Activated B cell treated with CpG ODN at 0.5 μM for 24 hours (primary cell): ENCODE measurements at regions of chr17 and their contacts with region 1.

Region 1: GRCh38 chr17:75779231-75779986 is 5.2 kb upstream of the UNK start:
- DNase-seq: peak; percentile 87
- ATAC-seq: peak; percentile 64
- H3K4me3 Mint-ChIP-seq: peak overlapping the region; percentile 89
- H3K27ac Mint-ChIP-seq: peak overlapping the region; percentile 94
- H3K4me1 Mint-ChIP-seq: peaks cover 60% of the 10 kb centered on the region
- H3K27me3 Mint-ChIP-seq: no peaks in the 10 kb centered on the region
- CTCF ChIP-seq: no peak

Region 2: GRCh38 chr17:75524953-75525719 is 254.3 kb before region 1 on chr17 and contains the start of gene LLGL2:
- CTCF ChIA-PET with region 1: no interaction called
- POLR2A ChIA-PET with region 1: interaction called, 4 read pairs
- intact Hi-C with region 1: loop called (anchors 1 kb)
- DNase-seq: peak; percentile 88
- ATAC-seq: peak; percentile 94
- H3K4me3 Mint-ChIP-seq: peak within 1 kb of the TSS; percentile 77
- H3K27ac Mint-ChIP-seq: peak within 1 kb of the TSS; percentile 18
- H3K4me1 Mint-ChIP-seq: peaks cover 10% of the 10 kb centered on the region
- H3K27me3 Mint-ChIP-seq: no peaks in the 10 kb centered on the region
- CTCF ChIP-seq: no peak
- total RNA-seq, gene LLGL2: 27.5 and 29.9 TPM in 2 replicates

Region 3: GRCh38 chr17:75764711-75765421 is 14.5 kb before region 1 on chr17 and contains the start of gene GALK1:
- CTCF ChIA-PET with region 1: interaction called, 9 read pairs
- POLR2A ChIA-PET with region 1: interaction called, 91 read pairs
- intact Hi-C with region 1: loop called (anchors 1 kb)
- DNase-seq: peak; percentile 74
- ATAC-seq: peak; percentile 95
- H3K4me3 Mint-ChIP-seq: peak within 1 kb of the TSS; percentile 81
- H3K27ac Mint-ChIP-seq: peak within 1 kb of the TSS; percentile 53
- H3K4me1 Mint-ChIP-seq: peaks cover 16% of the 10 kb centered on the region
- H3K27me3 Mint-ChIP-seq: no peaks in the 10 kb centered on the region
- CTCF ChIP-seq: no peak
- total RNA-seq, gene GALK1: 14.9 and 22.9 TPM in 2 replicates

Region 4: DNA sequence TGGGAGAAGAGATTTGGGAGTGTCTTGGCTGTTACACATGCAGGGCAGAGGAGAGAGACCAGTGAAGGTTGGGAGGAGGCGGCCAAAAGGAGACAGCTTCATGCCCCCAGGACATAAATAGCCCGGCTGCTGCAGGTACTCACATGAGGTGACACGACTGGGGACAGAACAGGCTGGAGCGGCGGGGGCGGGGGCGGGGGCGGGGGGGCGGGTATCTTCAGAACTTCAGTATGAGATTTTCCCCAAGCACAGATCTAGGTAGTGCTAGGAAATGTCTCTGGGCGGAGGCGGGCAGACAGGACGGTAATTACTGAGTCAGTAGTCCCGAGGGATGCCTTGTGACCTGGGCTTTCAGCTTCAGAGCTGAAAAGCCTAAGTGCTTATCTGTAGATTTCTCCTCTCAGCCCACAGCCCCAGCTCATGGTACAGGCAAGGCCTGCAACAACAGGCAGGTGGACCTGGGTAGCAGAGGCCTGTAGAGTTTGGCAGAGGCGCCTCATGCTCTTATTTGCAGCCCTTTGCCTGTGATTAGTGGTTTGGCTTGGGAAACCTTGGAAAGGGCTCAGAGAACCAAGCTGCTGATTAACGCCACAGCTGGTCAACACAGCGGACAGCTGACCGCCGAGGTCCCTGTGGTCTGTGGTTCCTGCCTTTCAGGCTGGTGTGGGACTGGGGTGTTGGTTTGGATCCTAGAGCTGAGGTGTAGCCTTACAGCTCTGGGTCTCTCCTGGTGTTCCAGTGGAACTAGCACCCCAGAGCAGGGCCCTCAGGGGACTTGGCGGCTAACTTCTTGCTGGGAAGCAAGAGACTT is 29.7 kb after region 1 on chr17:
- CTCF ChIA-PET with region 1: no interaction called
- POLR2A ChIA-PET with region 1: interaction called, 13 read pairs
- intact Hi-C with region 1: loop called (anchors 2 kb)
- DNase-seq: no peak
- ATAC-seq: peak; percentile 99
- H3K4me3 Mint-ChIP-seq: no peak overlapping the region
- H3K27ac Mint-ChIP-seq: peak overlapping the region; percentile 19
- H3K4me1 Mint-ChIP-seq: peaks cover 15% of the 10 kb centered on the region
- H3K27me3 Mint-ChIP-seq: no peaks in the 10 kb centered on the region
- CTCF ChIP-seq: no peak

Region 5: GRCh38 chr17:75845049-75845860 is 65.8 kb after region 1 on chr17:
- CTCF ChIA-PET with region 1: interaction called, 9 read pairs
- POLR2A ChIA-PET with region 1: interaction called, 70 read pairs
- intact Hi-C with region 1: no loop called
- DNase-seq: peak; percentile 71
- ATAC-seq: peak; percentile 90
- H3K4me3 Mint-ChIP-seq: peak overlapping the region; percentile 66
- H3K27ac Mint-ChIP-seq: peak overlapping the region; percentile 75
- H3K4me1 Mint-ChIP-seq: peaks cover 29% of the 10 kb centered on the region
- H3K27me3 Mint-ChIP-seq: no peaks in the 10 kb centered on the region
- CTCF ChIP-seq: no peak

Region 6: DNA sequence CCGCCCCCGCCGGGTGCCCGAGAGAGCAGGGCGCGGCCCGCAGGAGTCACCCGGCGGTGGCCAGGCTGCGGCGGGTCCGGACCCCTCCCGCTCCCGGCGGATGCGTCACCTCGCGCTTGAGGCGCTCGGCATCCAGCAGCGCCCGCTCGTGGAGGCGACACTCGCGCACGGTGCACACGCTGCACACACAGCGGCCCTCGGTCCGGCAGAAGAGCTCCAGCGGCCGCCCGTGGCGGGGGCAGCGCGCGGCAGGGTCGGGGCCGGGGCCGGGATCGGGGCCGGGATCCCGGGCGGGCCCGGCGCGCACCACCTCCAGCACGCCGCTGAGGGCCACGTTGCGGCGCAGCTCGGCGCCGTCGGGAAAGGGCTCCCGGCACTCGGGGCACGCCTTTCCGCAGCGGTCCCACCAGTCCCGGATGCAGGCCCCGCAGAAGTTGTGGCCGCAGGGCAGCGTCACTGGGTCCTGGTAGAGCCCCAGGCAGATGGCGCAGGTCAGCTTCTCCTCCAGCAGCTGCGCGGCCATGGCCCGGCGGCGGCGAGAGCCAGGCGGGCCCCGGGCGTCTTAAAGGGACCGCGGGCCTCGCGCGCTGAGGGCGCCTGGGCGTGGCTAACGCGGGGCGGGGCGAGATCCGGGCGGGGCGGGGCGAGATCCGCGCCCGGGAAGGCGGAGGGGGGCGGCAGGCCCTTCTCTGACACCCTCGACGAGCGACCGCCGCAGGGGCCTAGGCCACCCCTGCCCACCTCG is 117.2 kb after region 1 on chr17 and contains the start of gene TRIM65:
- CTCF ChIA-PET with region 1: interaction called, 4 read pairs
- POLR2A ChIA-PET with region 1: interaction called, 27 read pairs
- intact Hi-C with region 1: loop called (anchors 2 kb)
- DNase-seq: peak; percentile 86
- ATAC-seq: peak; percentile 85
- H3K4me3 Mint-ChIP-seq: peak within 1 kb of the TSS; percentile 82
- H3K27ac Mint-ChIP-seq: peak within 1 kb of the TSS; percentile 73
- H3K4me1 Mint-ChIP-seq: peaks cover 27% of the 10 kb centered on the region
- H3K27me3 Mint-ChIP-seq: no peaks in the 10 kb centered on the region
- CTCF ChIP-seq: no peak
- total RNA-seq, gene TRIM65: 20.0 and 22.4 TPM in 2 replicates